ENCODE measurements at regions of chr10 and their contacts with region 1.

Region 1: GRCh38 chr10:103911021-103911459 is 6.9 kb downstream of the STN1 start:
- DNase-seq: no peak
- H3K4me3 Mint-ChIP-seq: peak overlapping the region; percentile 43
- H3K27ac Mint-ChIP-seq: peak overlapping the region; percentile 62
- H3K4me1 Mint-ChIP-seq: peaks cover 32% of the 10 kb centered on the region
- H3K27me3 Mint-ChIP-seq: no peaks in the 10 kb centered on the region
- CTCF ChIP-seq: no peak

Region 2: GRCh38 chr10:103870516-103870915 is 40.5 kb before region 1 on chr10:
- CTCF ChIA-PET with region 1: no interaction called
- POLR2A ChIA-PET with region 1: interaction called, 21 read pairs
- intact Hi-C with region 1: no loop called
- DNase-seq: peak; percentile 97
- H3K4me3 Mint-ChIP-seq: peak overlapping the region; percentile 70
- H3K27ac Mint-ChIP-seq: peak overlapping the region; percentile 97
- H3K4me1 Mint-ChIP-seq: peaks cover 29% of the 10 kb centered on the region
- H3K27me3 Mint-ChIP-seq: no peaks in the 10 kb centered on the region
- CTCF ChIP-seq: no peak

Region 3: DNA sequence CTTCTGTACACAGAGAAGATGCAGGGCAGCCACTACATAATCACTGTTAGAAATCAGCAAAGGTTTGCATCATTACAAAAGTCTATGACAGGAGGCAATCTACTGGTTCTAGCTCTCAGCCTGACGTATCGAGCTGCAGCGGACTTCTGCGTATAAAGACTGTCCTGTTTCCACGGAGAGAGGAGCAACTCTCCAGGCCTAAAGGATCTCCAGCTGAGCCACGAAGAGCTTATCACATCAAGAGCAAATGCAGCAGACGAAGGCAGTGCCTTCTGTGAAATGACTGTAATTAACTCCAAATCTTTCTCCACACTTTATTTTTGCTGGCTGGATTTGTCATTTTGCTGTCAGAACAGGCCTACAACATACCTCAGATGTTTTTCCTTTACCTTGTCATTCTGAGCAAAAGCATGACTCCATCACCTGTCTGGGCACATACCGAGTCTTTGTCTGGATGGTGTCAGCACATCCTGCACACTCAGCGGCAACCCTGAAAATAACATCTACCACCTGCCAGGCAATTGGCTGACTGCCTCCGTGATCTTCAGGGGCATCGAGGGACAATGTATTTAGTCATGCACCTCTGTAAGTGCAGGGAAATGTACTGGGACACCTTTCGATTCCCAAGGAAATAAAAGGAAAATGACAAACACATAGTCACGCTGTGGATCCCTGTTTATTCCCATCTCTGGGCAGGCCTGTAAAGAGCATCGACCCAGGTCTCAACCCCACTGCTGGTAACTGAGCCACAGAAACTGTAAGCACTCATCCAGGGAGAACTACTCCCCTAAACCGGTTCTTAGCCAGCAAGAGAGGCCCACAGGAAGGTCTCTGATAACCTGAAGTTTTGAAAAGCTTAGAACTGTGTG is 29.4 kb before region 1 on chr10:
- CTCF ChIA-PET with region 1: interaction called, 3 read pairs
- POLR2A ChIA-PET with region 1: interaction called, 78 read pairs
- intact Hi-C with region 1: no loop called
- DNase-seq: peak; percentile 86
- H3K4me3 Mint-ChIP-seq: no peak overlapping the region
- H3K27ac Mint-ChIP-seq: peak overlapping the region; percentile 68
- H3K4me1 Mint-ChIP-seq: peaks cover 38% of the 10 kb centered on the region
- H3K27me3 Mint-ChIP-seq: no peaks in the 10 kb centered on the region
- CTCF ChIP-seq: no peak

Region 4: DNA sequence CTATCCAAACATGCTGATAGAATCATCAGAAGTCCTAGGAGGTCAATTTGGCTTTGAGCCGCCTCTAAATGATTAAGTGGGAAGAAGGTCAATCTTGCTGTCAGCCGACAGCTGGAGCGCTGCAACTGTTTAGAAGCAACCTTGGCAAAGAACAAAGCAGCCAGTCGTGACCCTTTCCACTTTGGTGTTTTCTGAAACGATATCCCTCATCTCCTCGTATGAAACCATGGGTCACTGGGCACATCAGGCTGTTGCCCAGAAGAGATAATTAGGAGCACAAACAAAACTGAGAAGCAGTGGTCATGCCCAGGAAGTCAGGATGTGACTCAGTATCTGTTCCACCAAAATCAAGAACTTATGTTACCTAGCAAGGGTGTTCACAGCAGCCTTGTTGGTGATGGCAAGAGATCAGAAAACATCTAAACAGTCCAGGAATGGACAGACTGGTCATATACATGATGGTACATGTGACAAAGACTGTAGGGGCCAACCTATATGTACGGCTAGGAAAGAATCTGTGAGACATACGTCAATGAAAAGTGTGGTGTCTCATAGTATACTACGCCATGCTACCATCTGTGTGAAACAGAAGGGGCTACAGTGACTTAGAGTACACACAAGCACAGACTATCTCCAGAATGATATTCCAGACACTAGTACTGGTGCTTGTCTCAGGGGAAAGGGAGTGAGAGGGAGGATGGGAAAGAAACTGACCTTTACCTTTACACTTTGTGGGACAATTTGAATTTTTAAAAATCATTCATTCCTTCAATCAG is 15.4 kb before region 1 on chr10:
- CTCF ChIA-PET with region 1: interaction called, 13 read pairs
- POLR2A ChIA-PET with region 1: interaction called, 85 read pairs
- intact Hi-C with region 1: no loop called
- DNase-seq: peak; percentile 60
- H3K4me3 Mint-ChIP-seq: no peak overlapping the region
- H3K27ac Mint-ChIP-seq: peak overlapping the region; percentile 91
- H3K4me1 Mint-ChIP-seq: peaks cover 39% of the 10 kb centered on the region
- H3K27me3 Mint-ChIP-seq: no peaks in the 10 kb centered on the region
- CTCF ChIP-seq: no peak

Region 5: GRCh38 chr10:103958996-103959395 is 48.0 kb after region 1 on chr10:
- CTCF ChIA-PET with region 1: interaction called, 6 read pairs
- POLR2A ChIA-PET with region 1: interaction called, 14 read pairs
- intact Hi-C with region 1: no loop called
- DNase-seq: peak; percentile 18
- H3K4me3 Mint-ChIP-seq: no peak overlapping the region
- H3K27ac Mint-ChIP-seq: no peak overlapping the region
- H3K4me1 Mint-ChIP-seq: peaks cover 14% of the 10 kb centered on the region
- H3K27me3 Mint-ChIP-seq: no peaks in the 10 kb centered on the region
- CTCF ChIP-seq: no peak